Activated T-helper 1 cell treated with anti-CD3 and anti-CD28 coated beads, Interleukin-12 subunit alpha, Interleukin-12 subunit beta, Interleukin-2, Interleukin-4 antibody, amounts not matched to agents 30 ng/mL and 10 ng/mL and 1 ng/mL, durations not matched to agents 14 hours and 24 hours and 36 hours (primary cell): ENCODE measurements at regions of chr1 and their contacts with region 1.

Region 1: DNA sequence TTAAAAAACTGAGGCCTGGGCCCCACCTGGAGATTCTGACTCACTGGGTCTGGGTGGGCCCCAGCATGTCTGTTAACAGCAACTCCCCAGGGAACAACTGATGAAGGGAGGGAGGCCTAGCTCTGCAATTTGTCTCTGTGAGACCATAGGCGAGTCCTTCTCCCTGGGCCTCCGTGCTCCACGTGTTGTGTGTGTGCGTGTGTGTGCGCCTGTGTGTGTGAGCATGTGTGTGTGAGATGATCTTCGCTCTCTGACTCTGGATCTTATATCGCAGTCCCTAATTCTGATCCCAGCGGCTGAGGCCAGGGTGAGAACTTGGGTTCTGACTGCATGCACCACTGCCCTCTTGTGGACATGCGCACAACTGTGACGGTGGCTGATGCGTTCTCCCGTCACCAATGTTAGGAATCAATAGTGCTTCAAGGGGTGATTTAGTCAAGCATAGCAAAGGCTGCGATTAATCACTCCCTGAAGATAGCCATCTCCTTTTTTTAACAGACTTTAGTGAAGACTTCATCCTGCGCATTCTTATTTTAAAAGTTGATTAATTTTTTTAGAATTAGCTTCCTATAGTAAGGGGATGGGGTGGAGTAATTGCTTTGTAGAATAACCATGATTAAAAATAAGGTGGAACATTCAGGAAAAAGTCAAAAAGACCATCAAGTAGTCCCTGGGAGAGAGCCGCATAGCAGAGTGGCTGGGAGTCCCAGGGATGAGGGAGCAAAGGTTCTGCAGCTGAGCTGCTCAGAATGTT is 62.4 kb upstream of the USP24 start:
- DNase-seq: peak; percentile 66
- H3K4me3 Mint-ChIP-seq: no peak overlapping the region
- H3K27ac Mint-ChIP-seq: peak overlapping the region; percentile 32
- H3K4me1 Mint-ChIP-seq: peaks cover 26% of the 10 kb centered on the region
- H3K27me3 Mint-ChIP-seq: peaks cover 10% of the 10 kb centered on the region

Region 2: GRCh38 chr1:55071477-55071876 is 206.1 kb before region 1 on chr1:
- intact Hi-C with region 1: loop called (anchors 2 kb)
- DNase-seq: no peak
- H3K4me3 Mint-ChIP-seq: no peak overlapping the region
- H3K27ac Mint-ChIP-seq: no peak overlapping the region
- H3K4me1 Mint-ChIP-seq: peaks cover 21% of the 10 kb centered on the region
- H3K27me3 Mint-ChIP-seq: no peaks in the 10 kb centered on the region

Region 3: GRCh38 chr1:55127827-55128343 is 149.7 kb before region 1 on chr1:
- intact Hi-C with region 1: loop called (anchors 1 kb)
- DNase-seq: no peak
- H3K4me3 Mint-ChIP-seq: peak overlapping the region; percentile 8
- H3K27ac Mint-ChIP-seq: peak overlapping the region; percentile 69
- H3K4me1 Mint-ChIP-seq: peaks cover 31% of the 10 kb centered on the region
- H3K27me3 Mint-ChIP-seq: no peaks in the 10 kb centered on the region

Region 4: DNA sequence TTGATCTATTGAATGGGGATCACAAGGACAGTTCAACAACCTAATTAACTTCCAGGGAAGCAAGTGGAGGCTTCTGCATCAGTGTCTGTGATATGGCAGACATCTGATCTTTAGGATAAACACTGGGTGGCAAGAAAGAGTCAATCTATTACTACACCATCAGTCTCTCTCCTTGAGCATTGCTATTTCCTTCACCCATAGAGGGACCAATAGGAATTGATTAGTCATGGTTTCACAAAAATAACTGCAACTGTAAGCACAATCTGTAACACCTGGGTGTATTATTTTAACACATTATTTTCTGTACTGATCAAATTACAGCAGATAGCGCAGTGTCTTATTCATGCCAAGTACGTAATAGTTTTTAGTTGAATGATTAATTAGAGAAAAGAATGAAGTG is 112.6 kb before region 1 on chr1:
- intact Hi-C with region 1: loop called (anchors 1 kb)
- DNase-seq: no peak
- H3K4me3 Mint-ChIP-seq: no peak overlapping the region
- H3K27ac Mint-ChIP-seq: peak overlapping the region; percentile 49
- H3K4me1 Mint-ChIP-seq: peaks cover 44% of the 10 kb centered on the region
- H3K27me3 Mint-ChIP-seq: no peaks in the 10 kb centered on the region

Region 5: GRCh38 chr1:55257958-55258357 is 19.6 kb before region 1 on chr1:
- intact Hi-C with region 1: loop called (anchors 1 kb)
- DNase-seq: peak; percentile 61
- H3K4me3 Mint-ChIP-seq: no peak overlapping the region
- H3K27ac Mint-ChIP-seq: peak overlapping the region; percentile 78
- H3K4me1 Mint-ChIP-seq: peaks cover 15% of the 10 kb centered on the region
- H3K27me3 Mint-ChIP-seq: peaks cover 26% of the 10 kb centered on the region